Dorsolateral prefrontal cortex (tissue), 120 donors: ENCODE measurements at regions of chr15 and their contacts with region 1.

Region 1: DNA sequence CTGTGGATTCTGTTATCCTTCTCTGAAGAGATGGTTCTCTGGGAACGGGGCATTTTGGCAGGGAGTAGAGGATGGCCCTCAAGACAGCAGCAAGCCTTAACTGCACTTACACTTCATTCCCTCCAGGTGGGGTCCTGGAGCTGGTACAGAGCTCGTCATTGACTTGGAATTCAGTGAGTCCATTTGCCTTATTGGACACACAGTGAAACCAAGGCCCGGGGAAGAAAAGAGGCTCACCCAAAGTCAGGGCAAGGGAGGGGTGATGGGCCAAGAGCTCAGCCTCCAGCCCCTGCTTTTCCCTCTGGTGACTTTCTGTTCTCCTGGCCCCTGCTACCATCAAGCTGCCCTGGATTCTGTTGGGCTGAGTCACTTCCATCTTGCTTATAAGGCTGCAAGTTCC is 125.6 kb downstream of the ETFA start:
- DNase-seq: no peak
- H3K4me3 ChIP-seq: no peak overlapping the region
- H3K27ac ChIP-seq: peak overlapping the region in 1 of 59 donors; percentile 51
- H3K27me3 ChIP-seq: peaks cover 0 to 4% (median 0%) of the 10 kb centered on the region in 45 donors
- CTCF ChIP-seq: peak in 24 of 56 donors; percentile 6 to 36 (median 23)

Region 2: GRCh38 chr15:76336254-76337058 is 150.7 kb after region 1 on chr15 and contains the start of gene ISL2:
- intact Hi-C with region 1: loop called (anchors 5 to 10 kb)
- DNase-seq: peak in 9 of 10 donors; percentile 38 to 85 (median 60)
- H3K4me3 ChIP-seq: peak within 1 kb of the TSS in 54 of 59 donors; percentile 3 to 62 (median 36)
- H3K27ac ChIP-seq: peak within 1 kb of the TSS in 2 of 59 donors; percentile 39 to 42
- H3K27me3 ChIP-seq: peaks cover 6 to 92% (median 82%) of the 10 kb centered on the region in 45 donors
- CTCF ChIP-seq: no peak
- total RNA-seq, gene ISL2: 0.29 to 1.3 (median 0.46) TPM in 37 of 120 experiments, not detected in the others